Naive thymus-derived CD4-positive, alpha-beta T cell (primary cell): ENCODE measurements at regions of chr1 and their contacts with region 1.

Region 1: DNA sequence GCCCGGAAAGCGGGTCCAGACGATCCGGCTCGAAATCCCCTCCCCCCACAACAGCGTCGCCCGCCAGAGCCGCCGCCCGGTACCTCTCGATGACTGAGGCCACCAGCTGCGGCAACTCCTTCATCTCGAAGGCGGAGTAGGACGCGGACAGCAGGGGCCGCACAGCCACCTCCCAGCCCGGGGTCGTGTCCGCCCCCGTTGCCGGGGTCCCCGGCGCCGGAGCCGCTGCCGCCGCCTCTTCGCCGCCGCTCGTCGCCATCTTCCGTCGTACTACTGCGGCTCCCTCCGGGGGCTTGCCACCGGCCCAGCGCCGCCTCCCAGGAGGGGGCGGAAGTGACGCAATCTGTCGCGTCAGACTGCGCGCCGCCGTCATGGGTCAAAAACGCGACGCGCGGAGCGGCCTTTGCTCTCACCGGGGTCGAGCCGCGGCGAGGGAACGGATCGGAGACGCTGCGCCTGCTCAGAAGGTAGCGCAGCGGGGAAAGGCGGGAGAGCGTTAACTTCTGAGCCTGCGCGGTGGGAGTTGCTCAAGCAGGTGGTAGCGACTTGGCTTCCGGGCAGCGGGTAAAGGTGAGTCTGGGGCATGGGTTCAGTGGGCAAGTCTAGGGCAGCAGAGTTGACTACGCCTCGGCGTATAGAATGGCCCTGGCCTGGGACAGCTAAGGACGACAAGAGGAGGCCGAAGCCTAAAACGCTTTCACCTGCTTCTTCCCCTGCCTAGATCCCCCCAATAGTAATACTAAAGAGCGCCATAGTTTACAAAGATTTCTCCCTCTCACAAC is at the start of gene UBR4:
- DNase-seq: peak; percentile 95 to 97 (median 96)
- ATAC-seq: peak; percentile 95
- H3K4me3 ChIP-seq: peak within 1 kb of the TSS; percentile 60
- H3K4me3 Mint-ChIP-seq: peak within 1 kb of the TSS; percentile 83 to 98 (median 94)
- H3K27ac ChIP-seq: peak within 1 kb of the TSS; percentile 85
- H3K27ac Mint-ChIP-seq: peak within 1 kb of the TSS; percentile 94 to 99 (median 97)
- H3K4me1 ChIP-seq: peaks cover 24 to 38% of the 10 kb centered on the region in 2 donors
- H3K4me1 Mint-ChIP-seq: peaks cover 49 to 87% (median 82%) of the 10 kb centered on the region in 7 donors
- H3K27me3 ChIP-seq: no peaks in the 10 kb centered on the region
- H3K27me3 Mint-ChIP-seq: peaks cover 0 to 2% (median 0%) of the 10 kb centered on the region in 5 donors
- total RNA-seq, gene UBR4: 120 to 174 (median 159) TPM

Region 2: DNA sequence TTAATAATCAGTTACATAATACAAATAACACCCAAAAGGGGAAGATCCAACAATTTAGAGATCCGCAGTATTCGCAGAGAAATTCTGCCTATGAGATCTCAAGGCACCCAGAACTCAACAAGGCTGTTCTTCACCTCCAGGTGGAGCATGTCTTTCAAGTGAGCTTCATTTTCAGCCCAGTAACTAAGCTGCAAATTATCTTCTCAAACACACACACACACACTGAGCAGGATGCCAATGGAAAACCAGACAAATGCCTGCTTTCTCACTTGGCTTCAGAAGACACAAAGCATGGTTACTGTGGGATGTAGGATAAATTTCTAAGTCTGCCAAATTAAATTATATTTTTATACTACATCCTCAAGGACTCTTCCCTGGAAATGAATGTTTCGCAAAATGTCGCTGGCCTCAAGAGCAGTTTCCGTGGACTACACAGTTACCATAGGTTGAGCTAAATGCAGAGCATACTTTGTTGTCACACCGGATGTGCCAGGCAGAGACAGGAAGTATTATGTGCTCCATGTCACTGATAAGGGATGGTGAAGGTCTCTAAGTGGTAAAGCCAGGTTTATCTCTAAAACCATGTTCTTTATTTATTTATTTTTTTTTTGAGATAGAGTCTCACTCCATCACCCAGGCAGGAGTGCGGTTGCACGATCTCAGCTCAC is 30.4 kb before region 1 on chr1:
- CTCF ChIA-PET with region 1: no interaction called
- POLR2A ChIA-PET with region 1: interaction called, 5 read pairs
- intact Hi-C with region 1: loop called (anchors 2 to 5 kb)
- DNase-seq: peak in 7 of 9 donors; percentile 38 to 70 (median 49)
- ATAC-seq: peak; percentile 87
- H3K4me3 ChIP-seq: no peak overlapping the region
- H3K4me3 Mint-ChIP-seq: peak overlapping the region; percentile 16 to 64 (median 54)
- H3K27ac ChIP-seq: peak overlapping the region; percentile 45
- H3K27ac Mint-ChIP-seq: peak overlapping the region; percentile 75 to 95 (median 89)
- H3K4me1 ChIP-seq: peaks cover 0 to 19% of the 10 kb centered on the region in 2 donors
- H3K4me1 Mint-ChIP-seq: peaks cover 15 to 42% (median 31%) of the 10 kb centered on the region in 7 donors
- H3K27me3 ChIP-seq: no peaks in the 10 kb centered on the region
- H3K27me3 Mint-ChIP-seq: no peaks in the 10 kb centered on the region

Region 3: GRCh38 chr1:19311959-19312781 is 102.0 kb after region 1 on chr1 and contains the starts of genes AKR7A2 and SLC66A1:
- CTCF ChIA-PET with region 1: no interaction called
- POLR2A ChIA-PET with region 1: no interaction called
- intact Hi-C with region 1: loop called in 1 of 2 experiments (anchors 2 kb)
- DNase-seq: peak; percentile 68 to 97 (median 91)
- ATAC-seq: peak; percentile 98
- H3K4me3 ChIP-seq: peak within 1 kb of the TSS; percentile 76
- H3K4me3 Mint-ChIP-seq: peak within 1 kb of the TSS; percentile 86 to 94 (median 91)
- H3K27ac ChIP-seq: peak within 1 kb of the TSS; percentile 85
- H3K27ac Mint-ChIP-seq: peak within 1 kb of the TSS; percentile 33 to 83 (median 80)
- H3K4me1 ChIP-seq: peaks cover 16 to 17% of the 10 kb centered on the region in 2 donors
- H3K4me1 Mint-ChIP-seq: peaks cover 29 to 49% (median 44%) of the 10 kb centered on the region in 7 donors
- H3K27me3 ChIP-seq: no peaks in the 10 kb centered on the region
- H3K27me3 Mint-ChIP-seq: no peaks in the 10 kb centered on the region
- total RNA-seq, gene AKR7A2: 15.7 to 33.9 (median 25.2) TPM
- total RNA-seq, gene SLC66A1: 3.8 to 8.4 (median 7.2) TPM

Region 4: GRCh38 chr1:19882111-19883071 is 672.2 kb after region 1 on chr1 and contains the start of gene OTUD3:
- CTCF ChIA-PET with region 1: no interaction called
- POLR2A ChIA-PET with region 1: no interaction called
- intact Hi-C with region 1: loop called in 1 of 2 experiments (anchors 1 kb)
- DNase-seq: peak; percentile 87 to 97 (median 96)
- ATAC-seq: peak; percentile 100
- H3K4me3 ChIP-seq: peak within 1 kb of the TSS; percentile 66
- H3K4me3 Mint-ChIP-seq: peak within 1 kb of the TSS; percentile 77 to 95 (median 88)
- H3K27ac ChIP-seq: peak within 1 kb of the TSS; percentile 82
- H3K27ac Mint-ChIP-seq: peak within 1 kb of the TSS; percentile 3 to 88 (median 75)
- H3K4me1 ChIP-seq: peaks cover 15 to 23% of the 10 kb centered on the region in 2 donors
- H3K4me1 Mint-ChIP-seq: peaks cover 20 to 50% (median 47%) of the 10 kb centered on the region in 7 donors
- H3K27me3 ChIP-seq: no peaks in the 10 kb centered on the region
- H3K27me3 Mint-ChIP-seq: peaks cover 0 to 15% (median 6%) of the 10 kb centered on the region in 5 donors
- total RNA-seq, gene OTUD3: 13.1 to 23.6 (median 20.8) TPM

Region 5: DNA sequence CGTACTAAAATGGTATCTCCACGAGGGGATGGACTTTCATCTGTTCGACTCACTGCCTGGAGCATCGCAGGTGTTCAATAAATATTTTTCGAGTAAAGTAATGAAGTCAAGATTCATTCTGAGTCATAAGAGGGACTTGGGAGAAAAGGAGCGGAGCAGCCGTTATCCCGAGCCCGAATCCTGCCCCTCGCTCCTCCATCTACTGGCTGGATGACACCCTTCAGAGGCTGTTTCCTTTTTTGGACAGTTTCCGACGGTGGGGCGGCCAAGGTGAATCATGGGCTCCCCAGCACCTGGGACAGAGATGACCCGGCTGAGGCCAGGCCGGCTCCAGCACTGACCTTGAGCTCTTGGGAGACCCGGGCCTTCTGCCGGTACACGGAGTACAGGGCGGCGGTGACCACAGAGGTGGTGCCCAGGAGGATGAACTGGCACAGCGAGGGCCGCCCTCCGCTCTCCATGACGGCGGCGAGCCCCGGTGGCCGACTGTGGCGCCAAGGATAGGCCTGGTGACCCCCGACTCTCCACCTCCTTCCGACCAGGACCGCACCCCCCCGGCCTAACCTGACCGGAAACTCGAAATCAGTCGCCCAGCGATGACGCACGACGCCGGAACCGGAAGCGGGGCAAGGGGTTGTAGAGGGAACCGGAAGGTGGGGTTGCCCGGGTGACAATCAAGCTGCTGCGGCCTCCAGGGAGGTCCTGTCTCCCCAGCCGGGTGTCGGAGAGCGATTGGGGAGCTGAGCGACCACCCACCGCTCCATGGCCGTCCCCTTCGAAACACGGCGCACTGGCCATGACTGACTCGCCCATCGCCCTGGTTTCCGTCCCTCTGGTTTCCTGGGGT is 1297.6 kb after region 1 on chr1 and contains the start of gene MUL1:
- CTCF ChIA-PET with region 1: no interaction called
- POLR2A ChIA-PET with region 1: no interaction called
- intact Hi-C with region 1: loop called in 1 of 2 experiments (anchors 5 kb)
- DNase-seq: peak; percentile 83 to 95 (median 89)
- ATAC-seq: peak; percentile 94
- H3K4me3 ChIP-seq: peak within 1 kb of the TSS; percentile 88
- H3K4me3 Mint-ChIP-seq: peak within 1 kb of the TSS; percentile 83 to 98 (median 88)
- H3K27ac ChIP-seq: peak within 1 kb of the TSS; percentile 97
- H3K27ac Mint-ChIP-seq: peak within 1 kb of the TSS; percentile 72 to 97 (median 92)
- H3K4me1 ChIP-seq: peaks cover 8 to 22% of the 10 kb centered on the region in 2 donors
- H3K4me1 Mint-ChIP-seq: peaks cover 15 to 40% (median 23%) of the 10 kb centered on the region in 7 donors
- H3K27me3 ChIP-seq: no peaks in the 10 kb centered on the region
- H3K27me3 Mint-ChIP-seq: peaks cover 0 to 5% (median 1%) of the 10 kb centered on the region in 5 donors
- total RNA-seq, gene MUL1: 16.5 to 21.5 (median 20.5) TPM